WTC11 (cell line): ENCODE measurements at regions of chr2 and their contacts with region 1.

Region 1: DNA sequence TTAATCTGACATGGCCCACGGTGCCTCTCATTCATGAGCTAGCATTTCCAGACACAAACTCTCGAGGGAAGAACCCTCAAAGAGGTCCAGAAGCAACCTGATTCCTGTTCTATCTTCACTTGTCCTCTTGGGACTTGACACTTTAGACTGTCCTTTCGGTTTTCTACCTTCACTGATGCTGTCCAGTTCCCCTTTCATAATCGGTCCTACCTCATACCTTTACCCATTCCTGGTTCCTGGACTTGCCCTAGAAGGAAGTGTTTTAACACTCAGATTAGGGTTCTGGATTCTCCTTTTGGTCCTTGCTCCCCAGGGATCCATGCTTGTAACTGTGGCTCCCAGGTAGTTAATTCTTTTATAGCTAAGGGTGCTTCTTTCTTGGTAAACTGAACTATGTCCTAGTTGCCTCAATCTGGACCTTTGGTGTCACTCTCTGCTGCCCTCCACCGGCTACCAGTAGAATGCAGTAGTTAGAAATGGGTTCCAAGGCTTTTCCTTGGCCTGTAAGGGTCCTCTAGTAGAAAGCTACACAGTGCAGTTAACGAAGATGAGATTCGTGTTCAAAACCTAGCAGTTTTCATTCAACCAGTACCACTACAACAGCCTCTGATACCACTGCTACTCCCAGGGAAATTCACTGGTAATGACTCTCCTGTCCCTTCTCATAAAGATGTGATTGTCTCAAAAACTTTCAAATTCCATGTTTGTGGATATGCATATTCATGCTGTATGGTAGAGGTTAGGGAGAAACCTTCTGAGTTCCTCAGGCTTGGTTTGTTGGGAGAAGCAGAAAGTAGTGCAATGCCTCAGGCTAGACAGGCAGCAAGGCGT is 178.1 kb upstream of the CYP26B1 start:
- DNase-seq: peak; percentile 72
- ATAC-seq: peak; percentile 94
- H3K4me3 Mint-ChIP-seq: no peak overlapping the region
- H3K27ac Mint-ChIP-seq: no peak overlapping the region
- H3K4me1 Mint-ChIP-seq: peaks cover 10% of the 10 kb centered on the region
- H3K27me3 Mint-ChIP-seq: no peaks in the 10 kb centered on the region
- CTCF ChIP-seq: peak; percentile 73

Region 2: DNA sequence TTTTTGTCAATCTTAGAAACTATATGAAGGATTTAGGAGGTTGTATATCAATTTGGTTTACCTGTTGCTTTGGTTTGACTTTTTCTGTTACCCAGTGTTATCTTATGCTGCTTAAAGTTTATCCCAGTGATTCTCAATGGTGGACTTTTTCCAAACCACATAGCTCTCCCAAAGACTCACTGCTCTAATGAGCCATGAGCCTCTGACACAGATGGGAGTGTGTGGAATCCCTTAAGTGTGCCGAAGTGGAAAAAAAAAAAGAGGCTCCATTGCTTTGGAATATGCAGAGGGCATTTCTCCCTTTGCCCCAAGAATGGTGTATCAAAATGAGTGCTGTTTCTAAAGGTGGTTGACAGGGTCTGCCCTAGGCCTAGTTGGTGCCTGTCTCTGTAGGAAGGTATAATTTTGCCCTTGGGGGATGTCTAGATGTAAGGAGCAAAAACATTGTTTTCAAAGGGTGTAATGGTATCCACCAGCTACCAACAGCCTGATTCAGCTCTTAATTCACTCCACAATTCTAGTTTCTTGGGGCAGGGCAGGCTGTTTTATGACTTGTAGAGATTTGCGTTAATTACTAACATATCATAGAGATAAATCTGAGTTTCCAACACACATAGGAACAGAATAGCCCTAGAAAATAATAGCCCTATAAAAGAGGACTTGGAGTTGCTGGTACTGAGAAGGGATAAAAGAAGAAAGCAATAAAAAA is 113.9 kb before region 1 on chr2:
- CTCF ChIA-PET with region 1: no interaction called
- POLR2A ChIA-PET with region 1: no interaction called
- DNase-seq: no peak
- ATAC-seq: no peak
- H3K4me3 Mint-ChIP-seq: no peak overlapping the region
- H3K27ac Mint-ChIP-seq: no peak overlapping the region
- H3K4me1 Mint-ChIP-seq: peaks cover 18% of the 10 kb centered on the region
- H3K27me3 Mint-ChIP-seq: no peaks in the 10 kb centered on the region
- CTCF ChIP-seq: no peak

Region 3: GRCh38 chr2:72338076-72338475 is 12.3 kb after region 1 on chr2:
- CTCF ChIA-PET with region 1: interaction called, 13 read pairs
- POLR2A ChIA-PET with region 1: no interaction called
- DNase-seq: no peak
- ATAC-seq: no peak
- H3K4me3 Mint-ChIP-seq: no peak overlapping the region
- H3K27ac Mint-ChIP-seq: no peak overlapping the region
- H3K4me1 Mint-ChIP-seq: peaks cover 2% of the 10 kb centered on the region
- H3K27me3 Mint-ChIP-seq: no peaks in the 10 kb centered on the region
- CTCF ChIP-seq: no peak

Region 4: GRCh38 chr2:72350852-72351251 is 25.0 kb after region 1 on chr2:
- CTCF ChIA-PET with region 1: interaction called, 14 read pairs
- POLR2A ChIA-PET with region 1: no interaction called
- DNase-seq: no peak
- ATAC-seq: peak; percentile 70
- H3K4me3 Mint-ChIP-seq: no peak overlapping the region
- H3K27ac Mint-ChIP-seq: peak overlapping the region; percentile 75
- H3K4me1 Mint-ChIP-seq: peaks cover 27% of the 10 kb centered on the region
- H3K27me3 Mint-ChIP-seq: no peaks in the 10 kb centered on the region
- CTCF ChIP-seq: no peak